B cell (primary cell): ENCODE measurements at regions of chr17 and their contacts with region 1.

Region 1: DNA sequence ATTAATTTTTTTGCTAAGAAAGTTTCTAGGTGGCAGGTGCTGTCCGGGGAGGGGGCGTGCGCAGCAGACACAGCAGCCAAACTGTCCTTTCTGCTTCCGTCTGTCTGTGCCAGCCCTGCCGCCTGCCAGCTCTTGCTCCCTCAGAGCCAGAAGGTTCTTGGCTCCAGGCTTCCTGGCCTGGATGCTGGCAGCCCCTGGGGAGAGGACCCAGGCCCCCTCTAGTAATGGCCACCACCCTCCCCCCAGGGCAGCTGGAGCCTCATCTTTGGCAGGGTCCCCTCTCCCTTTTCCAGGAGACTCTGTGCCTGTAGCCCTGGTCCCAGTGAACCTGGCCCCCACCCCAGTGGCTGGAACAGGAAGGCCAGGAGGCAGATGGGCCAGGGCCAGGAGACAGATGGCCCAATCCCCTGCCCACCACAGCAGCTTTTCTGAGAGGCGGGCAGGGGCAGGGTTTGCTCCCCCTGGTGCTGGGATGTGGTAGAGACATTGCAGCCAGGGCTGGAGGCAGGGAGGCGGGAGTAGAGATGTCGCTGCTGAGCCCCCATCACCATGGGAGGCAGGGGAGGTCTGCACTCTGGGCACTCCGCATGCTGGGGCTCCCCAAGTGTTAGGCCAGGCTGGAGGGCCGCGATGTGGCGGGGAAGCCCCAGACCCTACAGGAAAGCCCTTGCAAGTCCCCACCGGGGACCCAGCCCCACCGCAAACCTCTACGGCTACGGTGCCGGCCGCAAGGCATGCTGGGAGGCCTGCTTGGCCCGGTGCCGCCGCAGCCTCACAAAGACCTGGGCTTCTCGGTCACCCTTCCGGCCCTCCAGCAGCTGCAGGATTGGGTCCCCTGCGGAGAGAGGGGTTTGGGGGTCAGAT is 16.7 kb downstream of the UNC13D start:
- DNase-seq: peak; percentile 79
- ATAC-seq: peak; percentile 83
- H3K4me3 ChIP-seq: peak overlapping the region in 4 of 5 experiments; percentile 27 to 47 (median 36)
- H3K4me3 Mint-ChIP-seq: peak overlapping the region; percentile 82
- H3K27ac ChIP-seq: peak overlapping the region; percentile 42 to 54
- H3K27ac Mint-ChIP-seq: peak overlapping the region; percentile 86
- H3K4me1 ChIP-seq: peaks cover 8 to 18% of the 10 kb centered on the region in 2 donors
- H3K4me1 Mint-ChIP-seq: peaks cover 18% of the 10 kb centered on the region
- H3K27me3 ChIP-seq: no peaks in the 10 kb centered on the region
- H3K27me3 Mint-ChIP-seq: no peaks in the 10 kb centered on the region
- CTCF ChIP-seq: peak; percentile 80

Region 2: GRCh38 chr17:75705904-75706714 is 121.4 kb before region 1 on chr17:
- CTCF ChIA-PET with region 1: no interaction called
- POLR2A ChIA-PET with region 1: interaction called, 14 read pairs
- intact Hi-C with region 1: no loop called
- DNase-seq: no peak
- ATAC-seq: no peak
- H3K4me3 ChIP-seq: no peak overlapping the region
- H3K4me3 Mint-ChIP-seq: no peak overlapping the region
- H3K27ac ChIP-seq: no peak overlapping the region
- H3K27ac Mint-ChIP-seq: no peak overlapping the region
- H3K4me1 ChIP-seq: no peaks in the 10 kb centered on the region
- H3K4me1 Mint-ChIP-seq: peaks cover 2% of the 10 kb centered on the region
- H3K27me3 ChIP-seq: no peaks in the 10 kb centered on the region
- H3K27me3 Mint-ChIP-seq: no peaks in the 10 kb centered on the region
- CTCF ChIP-seq: no peak

Region 3: GRCh38 chr17:75764711-75765421 is 62.6 kb before region 1 on chr17 and contains the start of gene GALK1:
- CTCF ChIA-PET with region 1: interaction called, 63 read pairs
- POLR2A ChIA-PET with region 1: interaction called, 4 read pairs
- intact Hi-C with region 1: loop called (anchors 1 kb)
- DNase-seq: peak; percentile 88
- ATAC-seq: peak; percentile 91
- H3K4me3 ChIP-seq: peak within 1 kb of the TSS; percentile 38 to 88 (median 83)
- H3K4me3 Mint-ChIP-seq: peak within 1 kb of the TSS; percentile 85
- H3K27ac ChIP-seq: peak within 1 kb of the TSS; percentile 15 to 72
- H3K27ac Mint-ChIP-seq: peak within 1 kb of the TSS; percentile 83
- H3K4me1 ChIP-seq: peaks cover 14 to 23% of the 10 kb centered on the region in 2 donors
- H3K4me1 Mint-ChIP-seq: peaks cover 18% of the 10 kb centered on the region
- H3K27me3 ChIP-seq: no peaks in the 10 kb centered on the region
- H3K27me3 Mint-ChIP-seq: no peaks in the 10 kb centered on the region
- CTCF ChIP-seq: peak; percentile 78
- total RNA-seq, gene GALK1: 29.8 and 33.9 TPM in 2 replicates

Region 4: DNA sequence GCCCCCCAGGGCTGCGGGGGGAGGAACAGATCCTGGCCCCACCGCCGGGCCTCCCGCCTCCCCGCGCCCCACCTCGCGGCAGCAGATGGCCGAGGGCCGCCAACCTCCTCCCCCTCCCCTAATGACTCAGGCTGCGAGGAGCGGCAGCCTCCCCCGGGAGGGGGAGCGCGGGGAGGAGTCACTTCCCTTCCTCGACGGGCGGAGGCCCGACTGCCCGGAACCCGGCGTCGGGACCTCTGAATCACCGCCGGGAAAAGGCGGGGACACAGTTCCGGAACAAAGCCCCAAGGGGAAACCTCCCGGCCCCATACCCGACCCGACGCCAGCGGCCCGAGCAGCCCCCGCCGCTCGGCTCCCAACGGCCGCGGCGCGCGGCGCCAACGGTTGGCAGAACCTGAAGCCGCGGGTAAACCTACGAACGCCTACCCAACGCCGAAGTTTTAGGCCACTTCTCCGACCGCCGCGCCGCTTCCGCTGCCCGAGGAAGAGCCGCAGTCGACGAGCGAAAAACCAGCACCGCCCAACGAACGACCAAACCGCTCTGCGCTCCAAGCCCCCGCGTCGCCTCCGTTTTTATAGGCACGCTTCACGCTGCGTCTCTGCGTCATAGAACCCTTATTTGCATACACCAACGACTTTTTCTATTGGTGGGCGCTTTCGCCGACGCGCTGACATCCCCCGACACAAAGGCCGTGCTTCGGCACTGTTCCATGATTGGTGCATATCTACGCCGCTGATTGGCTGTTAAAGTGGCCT is 48.1 kb before region 1 on chr17:
- CTCF ChIA-PET with region 1: interaction called, 10 read pairs
- POLR2A ChIA-PET with region 1: interaction called, 8 read pairs
- intact Hi-C with region 1: loop called (anchors 2 kb)
- DNase-seq: peak; percentile 99
- ATAC-seq: peak; percentile 62
- H3K4me3 ChIP-seq: peak overlapping the region; percentile 89 to 95 (median 95)
- H3K4me3 Mint-ChIP-seq: peak overlapping the region; percentile 94
- H3K27ac ChIP-seq: peak overlapping the region; percentile 88 to 97
- H3K27ac Mint-ChIP-seq: peak overlapping the region; percentile 99
- H3K4me1 ChIP-seq: peaks cover 36 to 59% of the 10 kb centered on the region in 2 donors
- H3K4me1 Mint-ChIP-seq: peaks cover 63% of the 10 kb centered on the region
- H3K27me3 ChIP-seq: no peaks in the 10 kb centered on the region
- H3K27me3 Mint-ChIP-seq: no peaks in the 10 kb centered on the region
- CTCF ChIP-seq: no peak

Region 5: DNA sequence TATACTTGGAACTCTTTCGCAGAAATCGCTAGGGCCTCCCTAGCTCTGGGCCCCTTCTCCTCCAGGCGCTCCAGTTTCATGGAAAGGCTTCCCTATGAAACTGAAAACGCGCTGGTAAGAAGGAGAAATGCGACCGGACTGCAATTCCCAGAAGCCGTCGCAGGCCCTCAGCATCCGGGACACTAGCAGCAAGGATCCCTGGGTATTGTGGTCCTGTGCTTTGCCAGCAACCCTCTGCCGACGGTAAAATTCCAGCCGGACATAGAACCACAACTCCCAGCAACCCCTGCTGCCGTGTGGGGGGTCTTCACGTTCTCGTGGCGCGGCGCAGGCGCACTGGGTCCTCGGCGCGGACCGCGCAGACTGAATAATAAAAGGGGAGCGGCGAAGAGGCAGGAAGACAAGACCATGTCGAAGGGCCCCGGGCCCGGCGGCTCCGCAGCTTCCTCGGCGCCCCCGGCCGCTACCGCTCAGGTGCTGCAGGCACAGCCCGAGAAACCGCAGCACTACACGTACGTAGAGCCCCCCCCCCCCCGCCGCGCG is 42.9 kb before region 1 on chr17 and contains the start of gene UNK:
- CTCF ChIA-PET with region 1: interaction called, 15 read pairs
- POLR2A ChIA-PET with region 1: interaction called, 8 read pairs
- intact Hi-C with region 1: loop called (anchors 2 kb)
- DNase-seq: peak; percentile 99
- ATAC-seq: peak; percentile 75
- H3K4me3 ChIP-seq: peak within 1 kb of the TSS; percentile 75 to 83 (median 81)
- H3K4me3 Mint-ChIP-seq: peak within 1 kb of the TSS; percentile 96
- H3K27ac ChIP-seq: peak within 1 kb of the TSS; percentile 100
- H3K27ac Mint-ChIP-seq: peak within 1 kb of the TSS; percentile 100
- H3K4me1 ChIP-seq: peaks cover 42 to 49% of the 10 kb centered on the region in 2 donors
- H3K4me1 Mint-ChIP-seq: peaks cover 53% of the 10 kb centered on the region
- H3K27me3 ChIP-seq: no peaks in the 10 kb centered on the region
- H3K27me3 Mint-ChIP-seq: no peaks in the 10 kb centered on the region
- CTCF ChIP-seq: no peak
- total RNA-seq, gene UNK: 70.3 and 82.3 TPM in 2 replicates

Region 6: GRCh38 chr17:75803883-75804282 is 23.6 kb before region 1 on chr17:
- CTCF ChIA-PET with region 1: interaction called, 10 read pairs
- POLR2A ChIA-PET with region 1: interaction called, 4 read pairs
- intact Hi-C with region 1: no loop called
- DNase-seq: no peak
- ATAC-seq: no peak
- H3K4me3 ChIP-seq: no peak overlapping the region
- H3K4me3 Mint-ChIP-seq: no peak overlapping the region
- H3K27ac ChIP-seq: no peak overlapping the region
- H3K27ac Mint-ChIP-seq: no peak overlapping the region
- H3K4me1 ChIP-seq: peaks cover 0 to 6% of the 10 kb centered on the region in 2 donors
- H3K4me1 Mint-ChIP-seq: peaks cover 12% of the 10 kb centered on the region
- H3K27me3 ChIP-seq: no peaks in the 10 kb centered on the region
- H3K27me3 Mint-ChIP-seq: no peaks in the 10 kb centered on the region
- CTCF ChIP-seq: no peak

Region 7: DNA sequence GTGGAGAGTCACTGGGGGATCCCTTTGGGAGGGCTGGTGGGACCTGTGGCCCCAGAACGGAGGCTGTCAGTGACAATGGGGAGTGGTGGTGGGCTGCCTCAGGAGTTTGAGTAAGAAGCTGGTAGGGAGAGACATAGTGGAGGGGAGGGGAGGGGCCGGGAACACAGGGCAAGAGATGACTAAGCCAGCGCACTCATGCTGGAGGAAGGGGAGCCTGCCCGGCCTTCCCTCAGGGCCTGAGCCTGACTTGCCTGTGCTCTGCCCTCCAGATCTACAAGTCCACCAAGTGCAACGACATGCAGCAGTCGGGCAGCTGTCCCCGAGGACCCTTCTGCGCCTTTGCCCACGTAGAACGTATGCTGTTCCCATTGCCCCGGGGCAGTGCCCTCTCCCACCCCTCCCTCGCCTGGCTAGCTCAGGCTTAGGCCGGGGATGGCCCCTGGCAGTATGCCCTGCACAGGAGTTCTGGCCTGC is 12.5 kb before region 1 on chr17:
- CTCF ChIA-PET with region 1: interaction called, 12 read pairs
- POLR2A ChIA-PET with region 1: interaction called, 3 read pairs
- intact Hi-C with region 1: no loop called
- DNase-seq: no peak
- ATAC-seq: no peak
- H3K4me3 ChIP-seq: no peak overlapping the region
- H3K4me3 Mint-ChIP-seq: no peak overlapping the region
- H3K27ac ChIP-seq: no peak overlapping the region
- H3K27ac Mint-ChIP-seq: no peak overlapping the region
- H3K4me1 ChIP-seq: no peaks in the 10 kb centered on the region
- H3K4me1 Mint-ChIP-seq: no peaks in the 10 kb centered on the region
- H3K27me3 ChIP-seq: no peaks in the 10 kb centered on the region
- H3K27me3 Mint-ChIP-seq: no peaks in the 10 kb centered on the region
- CTCF ChIP-seq: no peak

Region 8: GRCh38 chr17:75933808-75934207 is 106.3 kb after region 1 on chr17:
- CTCF ChIA-PET with region 1: no interaction called
- POLR2A ChIA-PET with region 1: no interaction called
- intact Hi-C with region 1: no loop called
- DNase-seq: no peak
- ATAC-seq: no peak
- H3K4me3 ChIP-seq: no peak overlapping the region
- H3K4me3 Mint-ChIP-seq: no peak overlapping the region
- H3K27ac ChIP-seq: no peak overlapping the region
- H3K27ac Mint-ChIP-seq: no peak overlapping the region
- H3K4me1 ChIP-seq: no peaks in the 10 kb centered on the region
- H3K4me1 Mint-ChIP-seq: no peaks in the 10 kb centered on the region
- H3K27me3 ChIP-seq: no peaks in the 10 kb centered on the region
- H3K27me3 Mint-ChIP-seq: no peaks in the 10 kb centered on the region
- CTCF ChIP-seq: no peak